Kidney (tissue), 22 donors: ENCODE measurements at regions of chr3 and their contacts with region 1.

Region 1: GRCh38 chr3:168165390-168166269 is 69.9 kb upstream of the GOLIM4 start:
- DNase-seq: peak in 4 of 5 donors; percentile 49 to 92 (median 70)
- H3K4me3 ChIP-seq: no peak overlapping the region
- H3K27ac ChIP-seq: no peak overlapping the region
- H3K4me1 ChIP-seq: no peaks in the 10 kb centered on the region
- H3K27me3 ChIP-seq: no peaks in the 10 kb centered on the region
- CTCF ChIP-seq: peak; percentile 89

Region 2: GRCh38 chr3:167609156-167609555 is 556.5 kb before region 1 on chr3:
- intact Hi-C with region 1: no loop called
- DNase-seq: no peak
- H3K4me3 ChIP-seq: no peak overlapping the region
- H3K27ac ChIP-seq: no peak overlapping the region
- H3K4me1 ChIP-seq: no peaks in the 10 kb centered on the region
- H3K27me3 ChIP-seq: no peaks in the 10 kb centered on the region
- CTCF ChIP-seq: no peak

Region 3: DNA sequence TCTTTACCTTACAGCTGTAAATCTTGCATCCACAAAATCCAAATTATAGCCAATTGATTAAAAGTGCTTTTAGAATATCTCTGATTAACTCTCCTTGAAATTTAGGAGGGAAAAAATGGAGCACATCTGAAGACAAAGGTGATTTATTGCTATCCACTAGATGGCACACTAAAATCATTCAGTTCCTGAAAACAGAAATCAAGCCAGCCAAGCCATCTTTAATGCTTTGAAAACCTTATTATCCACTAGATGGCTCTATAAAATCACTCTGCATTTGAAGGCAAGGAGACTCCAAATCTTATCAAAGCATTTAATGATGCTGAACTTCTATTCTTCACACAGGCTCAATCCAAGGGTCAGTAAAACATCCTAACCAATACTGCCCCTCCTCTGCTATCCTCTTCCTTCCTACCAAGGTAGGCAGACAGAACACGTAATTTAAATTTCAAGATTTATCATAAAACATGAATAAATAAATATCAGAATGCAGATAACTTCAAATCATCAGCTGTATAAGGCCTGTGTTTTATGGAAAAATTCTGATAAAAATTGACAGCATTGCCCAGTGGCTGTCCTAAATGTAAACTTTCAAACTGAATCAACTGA is 118.3 kb before region 1 on chr3:
- intact Hi-C with region 1: loop called (anchors 5 kb)
- DNase-seq: peak in 2 of 5 donors; percentile 87 to 91
- H3K4me3 ChIP-seq: no peak overlapping the region
- H3K27ac ChIP-seq: no peak overlapping the region
- H3K4me1 ChIP-seq: peaks cover 0 to 3% (median 0%) of the 10 kb centered on the region in 3 donors
- H3K27me3 ChIP-seq: no peaks in the 10 kb centered on the region
- CTCF ChIP-seq: peak; percentile 87

Region 4: GRCh38 chr3:168088106-168088720 is 77.4 kb before region 1 on chr3:
- intact Hi-C with region 1: no loop called
- DNase-seq: no peak
- H3K4me3 ChIP-seq: no peak overlapping the region
- H3K27ac ChIP-seq: peak overlapping the region in 1 of 2 donors; percentile 9
- H3K4me1 ChIP-seq: peaks cover 0 to 25% (median 6%) of the 10 kb centered on the region in 3 donors
- H3K27me3 ChIP-seq: no peaks in the 10 kb centered on the region
- CTCF ChIP-seq: peak; percentile 5

Region 5: DNA sequence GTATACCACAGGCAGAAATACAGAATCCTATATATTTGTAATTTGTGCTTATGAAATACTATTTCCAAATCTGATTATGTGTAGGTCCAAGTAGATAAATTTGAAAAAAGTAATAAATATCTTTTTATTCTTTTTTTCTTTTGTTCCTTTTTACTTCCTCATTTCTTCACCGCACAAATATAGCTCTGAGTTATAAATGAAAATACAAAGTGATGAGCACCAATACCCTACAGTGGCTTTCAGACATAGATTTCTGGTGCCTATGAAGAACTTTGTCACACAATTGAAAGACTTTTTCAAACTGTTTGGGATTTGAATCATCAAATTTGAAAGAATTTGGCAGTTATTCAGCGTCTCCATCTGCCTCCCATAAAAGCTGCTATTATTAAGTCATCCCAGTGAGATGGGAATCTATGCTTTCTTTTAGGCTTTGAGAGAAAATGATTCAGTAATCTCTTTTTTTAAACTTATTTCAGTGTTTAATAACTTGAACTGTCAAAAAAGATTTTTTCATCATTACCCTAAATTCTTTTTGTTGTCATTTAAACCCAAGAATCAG is 293.7 kb after region 1 on chr3:
- intact Hi-C with region 1: no loop called
- DNase-seq: peak in 1 of 5 donors; percentile 5
- H3K4me3 ChIP-seq: no peak overlapping the region
- H3K27ac ChIP-seq: no peak overlapping the region
- H3K4me1 ChIP-seq: peaks cover 0 to 3% (median 0%) of the 10 kb centered on the region in 3 donors
- H3K27me3 ChIP-seq: no peaks in the 10 kb centered on the region
- CTCF ChIP-seq: no peak